Activated CD4-positive, alpha-beta memory T cell treated with anti-CD3 and anti-CD28 coated beads for 36 hours (primary cell): ENCODE measurements at regions of chr10 and their contacts with region 1.

Region 1: GRCh38 chr10:60964257-60965235 is 20.6 kb upstream of the RHOBTB1 start:
- DNase-seq: peak; percentile 57
- H3K4me3 Mint-ChIP-seq: no peak overlapping the region
- H3K27ac Mint-ChIP-seq: no peak overlapping the region
- H3K4me1 Mint-ChIP-seq: peaks cover 17% of the 10 kb centered on the region
- H3K27me3 Mint-ChIP-seq: peaks cover 18% of the 10 kb centered on the region

Region 2: DNA sequence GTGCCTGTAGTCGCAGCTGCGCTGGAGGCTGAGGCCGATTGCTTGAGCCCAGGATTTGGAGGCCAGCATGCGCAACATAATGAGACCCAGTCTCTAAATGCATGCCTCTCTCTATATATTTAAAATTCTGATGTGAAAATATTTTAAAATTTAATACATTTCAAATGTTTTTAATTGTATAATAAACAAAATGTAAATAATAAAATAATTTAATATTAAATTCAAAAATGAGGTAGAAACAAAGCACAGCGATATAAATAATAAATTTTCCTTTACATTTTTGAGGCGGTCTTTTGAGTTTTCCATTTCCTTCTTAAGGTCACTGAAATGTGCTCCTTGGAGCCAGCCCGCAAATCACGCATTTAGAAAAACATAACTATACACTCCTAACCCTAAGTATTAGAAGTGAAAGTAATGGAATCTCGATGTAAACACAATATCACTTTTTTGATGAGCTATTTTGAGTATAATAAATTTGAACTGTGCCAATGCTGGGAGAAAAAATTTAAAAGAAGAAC is 186.8 kb before region 1 on chr10:
- CTCF ChIA-PET with region 1: no interaction called
- POLR2A ChIA-PET with region 1: no interaction called
- intact Hi-C with region 1: no loop called
- DNase-seq: no peak
- H3K4me3 Mint-ChIP-seq: peak overlapping the region; percentile 91
- H3K27ac Mint-ChIP-seq: peak overlapping the region; percentile 92
- H3K4me1 Mint-ChIP-seq: peaks cover 18% of the 10 kb centered on the region
- H3K27me3 Mint-ChIP-seq: no peaks in the 10 kb centered on the region

Region 3: GRCh38 chr10:60883187-60883586 is 81.4 kb before region 1 on chr10:
- CTCF ChIA-PET with region 1: interaction called, 3 read pairs
- POLR2A ChIA-PET with region 1: no interaction called
- intact Hi-C with region 1: loop called (anchors 2 kb)
- DNase-seq: no peak
- H3K4me3 Mint-ChIP-seq: no peak overlapping the region
- H3K27ac Mint-ChIP-seq: no peak overlapping the region
- H3K4me1 Mint-ChIP-seq: no peaks in the 10 kb centered on the region
- H3K27me3 Mint-ChIP-seq: peaks cover 3% of the 10 kb centered on the region

Region 4: GRCh38 chr10:60948851-60949250 is 15.7 kb before region 1 on chr10:
- CTCF ChIA-PET with region 1: interaction called, 5 read pairs
- POLR2A ChIA-PET with region 1: no interaction called
- intact Hi-C with region 1: loop called (anchors 2 kb)
- DNase-seq: no peak
- H3K4me3 Mint-ChIP-seq: no peak overlapping the region
- H3K27ac Mint-ChIP-seq: no peak overlapping the region
- H3K4me1 Mint-ChIP-seq: peaks cover 3% of the 10 kb centered on the region
- H3K27me3 Mint-ChIP-seq: peaks cover 43% of the 10 kb centered on the region

Region 5: DNA sequence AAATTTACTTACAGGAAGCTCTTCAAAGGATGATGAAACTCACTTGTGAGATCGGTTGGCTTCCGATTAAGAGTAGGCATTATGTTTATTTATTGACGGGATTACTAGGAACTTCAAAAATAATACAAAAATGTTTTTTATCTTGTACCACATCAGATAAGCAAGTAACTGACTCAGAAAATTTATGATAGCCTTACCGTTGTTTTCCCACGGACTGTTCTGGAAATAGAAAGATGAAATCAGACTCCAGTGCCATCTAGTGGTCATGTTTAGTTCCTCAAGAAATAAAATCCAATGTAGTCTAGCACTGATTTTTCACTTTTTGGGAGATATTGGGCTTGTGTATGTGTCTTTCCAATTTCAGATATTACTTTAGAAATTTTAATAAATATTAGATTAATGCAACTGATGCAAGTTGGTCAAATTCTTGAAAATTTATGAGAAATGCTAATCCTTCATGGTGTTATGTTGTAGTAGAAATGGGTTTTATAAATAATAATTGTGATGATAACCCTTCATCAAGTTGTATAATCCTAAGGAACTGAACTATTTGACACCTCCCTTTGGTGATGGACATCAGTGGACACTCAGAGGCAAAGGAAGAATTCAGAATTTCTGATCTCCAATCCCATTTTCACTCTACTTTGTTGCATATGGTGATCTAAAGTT is 319.8 kb after region 1 on chr10:
- CTCF ChIA-PET with region 1: no interaction called
- POLR2A ChIA-PET with region 1: no interaction called
- intact Hi-C with region 1: loop called (anchors 1 kb)
- DNase-seq: no peak
- H3K4me3 Mint-ChIP-seq: peak overlapping the region; percentile 27
- H3K27ac Mint-ChIP-seq: no peak overlapping the region
- H3K4me1 Mint-ChIP-seq: peaks cover 18% of the 10 kb centered on the region
- H3K27me3 Mint-ChIP-seq: peaks cover 2% of the 10 kb centered on the region